ENCODE measurements at regions of chr10 and their contacts with region 1.

Region 1: DNA sequence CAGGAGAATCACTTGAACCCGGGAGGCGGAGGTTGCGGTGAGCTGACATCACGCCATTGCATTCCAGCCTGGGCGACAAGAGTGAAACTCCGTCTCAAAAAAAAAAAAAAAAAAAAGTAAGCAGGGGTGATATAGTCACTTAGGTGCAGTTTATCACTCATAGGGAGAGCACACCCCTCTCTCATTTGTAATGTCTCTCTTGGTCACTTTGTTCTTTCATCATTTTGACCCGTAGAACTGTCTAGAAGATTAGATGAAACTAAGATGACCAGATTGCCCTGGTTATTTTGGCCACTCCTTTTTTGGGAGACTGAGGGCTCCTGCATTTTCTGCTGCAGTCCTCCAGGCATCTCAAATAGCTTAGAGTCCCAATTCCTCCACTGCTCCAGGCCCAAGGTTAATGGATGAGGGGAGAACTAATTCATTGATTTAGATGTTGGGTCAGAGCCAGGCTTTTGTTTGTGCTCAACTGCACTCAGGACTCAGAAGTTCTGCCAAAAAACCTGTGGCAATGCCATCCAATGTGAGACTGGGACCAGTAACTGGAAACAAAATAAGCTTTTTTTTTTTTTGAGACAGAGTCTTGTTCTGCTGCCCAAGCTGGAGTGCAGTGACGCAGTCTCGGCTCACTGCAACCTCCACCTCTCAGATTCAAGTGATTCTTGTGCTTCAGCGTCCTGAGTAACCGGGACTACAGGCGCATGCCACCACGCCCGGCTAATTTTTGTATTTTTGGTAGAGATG is 50.0 kb upstream of the CAMK1D start:
- DNase-seq: no peak
- H3K4me3 ChIP-seq: no peak overlapping the region
- H3K27ac ChIP-seq: no peak overlapping the region
- H3K4me1 ChIP-seq: no peaks in the 10 kb centered on the region
- H3K27me3 ChIP-seq: no peaks in the 10 kb centered on the region
- CTCF ChIP-seq: no peak

Region 2: GRCh38 chr10:12205082-12205481 is 94.3 kb before region 1 on chr10:
- CTCF ChIA-PET with region 1: interaction called, 10 read pairs
- dilution Hi-C with region 1: no loop called
- in situ Hi-C with region 1: no loop called
- intact Hi-C with region 1: no loop called
- DNase-seq: no peak
- H3K4me3 ChIP-seq: no peak overlapping the region
- H3K27ac ChIP-seq: no peak overlapping the region
- H3K4me1 ChIP-seq: peaks cover 7% of the 10 kb centered on the region
- H3K27me3 ChIP-seq: no peaks in the 10 kb centered on the region
- CTCF ChIP-seq: no peak